GM12878 (cell line): ENCODE measurements at regions of chr1 and their contacts with region 1.

Region 1: DNA sequence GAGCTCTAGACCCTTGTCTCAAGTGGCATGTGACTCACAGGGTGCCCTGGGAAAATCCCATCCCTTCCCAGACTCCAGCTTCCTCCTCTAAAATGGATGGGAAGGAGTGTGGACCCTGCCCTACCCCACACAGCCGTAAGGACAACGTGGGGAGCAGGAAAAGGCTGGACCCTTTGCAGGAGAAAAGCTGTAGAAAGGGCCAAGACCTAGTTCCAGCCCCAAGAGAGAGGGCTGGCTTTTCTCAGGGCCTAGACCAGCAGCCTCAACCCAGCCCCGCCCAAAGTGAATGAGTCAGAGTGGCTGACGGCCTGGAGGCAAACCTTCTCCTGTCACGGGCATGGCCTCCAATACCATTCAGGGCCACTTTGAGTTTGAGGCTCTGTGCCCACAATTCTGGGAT is 1.1 kb downstream of the LAMB3 start:
- DNase-seq: no peak
- ATAC-seq: peak; percentile 78
- H3K4me3 ChIP-seq: no peak overlapping the region
- H3K27ac ChIP-seq: no peak overlapping the region
- H3K4me1 ChIP-seq: peaks cover 23% of the 10 kb centered on the region
- H3K27me3 ChIP-seq: no peaks in the 10 kb centered on the region
- CTCF ChIP-seq: no peak
- EP300 ChIP-seq: no peak
- POLR2A ChIP-seq: no peak
- RAD21 ChIP-seq: no peak

Region 2: GRCh38 chr1:209633335-209633997 is 17.7 kb before region 1 on chr1:
- CTCF ChIA-PET with region 1: interaction called, 8 read pairs
- POLR2A ChIA-PET with region 1: no interaction called
- RAD21 ChIA-PET with region 1: interaction called, 15 read pairs
- SMC1A ChIA-PET with region 1: interaction called, 8 read pairs
- in situ Hi-C with region 1: no loop called
- intact Hi-C with region 1: no loop called
- DNase-seq: no peak
- ATAC-seq: peak; percentile 79
- H3K4me3 ChIP-seq: no peak overlapping the region
- H3K27ac ChIP-seq: no peak overlapping the region
- H3K4me1 ChIP-seq: no peaks in the 10 kb centered on the region
- H3K27me3 ChIP-seq: no peaks in the 10 kb centered on the region; a peak in 1 of 4 replicates
- CTCF ChIP-seq: no peak
- EP300 ChIP-seq: no peak
- POLR2A ChIP-seq: no peak
- RAD21 ChIP-seq: no peak

Region 3: DNA sequence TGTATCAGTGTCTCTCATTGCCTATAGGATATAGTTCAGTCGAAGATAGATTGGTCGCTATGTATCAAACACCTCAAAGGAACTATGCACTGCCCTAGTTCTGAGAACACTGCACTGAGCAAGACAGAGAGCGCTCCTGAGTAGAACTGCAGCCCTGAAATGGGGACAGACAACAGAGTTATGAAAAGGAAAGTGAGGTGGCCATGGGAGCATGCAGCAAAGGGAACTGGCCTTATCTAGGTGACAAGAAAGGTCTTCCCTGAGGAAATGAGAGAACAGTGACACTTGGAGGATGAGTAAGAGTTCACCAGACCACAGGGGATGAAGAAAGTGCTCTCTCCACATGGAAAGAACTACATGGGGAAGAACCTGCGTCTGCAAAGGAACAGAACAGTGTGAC is 16.6 kb after region 1 on chr1:
- CTCF ChIA-PET with region 1: interaction called, 58 read pairs
- POLR2A ChIA-PET with region 1: interaction called, 95 read pairs
- RAD21 ChIA-PET with region 1: interaction called, 195 read pairs
- SMC1A ChIA-PET with region 1: interaction called, 261 read pairs
- in situ Hi-C with region 1: no loop called
- intact Hi-C with region 1: loop called (anchors 2 kb)
- DNase-seq: no peak
- ATAC-seq: peak; percentile 72
- H3K4me3 ChIP-seq: no peak overlapping the region
- H3K27ac ChIP-seq: no peak overlapping the region
- H3K4me1 ChIP-seq: peaks cover 3% of the 10 kb centered on the region
- H3K27me3 ChIP-seq: no peaks in the 10 kb centered on the region
- CTCF ChIP-seq: no peak
- EP300 ChIP-seq: no peak
- POLR2A ChIP-seq: no peak
- RAD21 ChIP-seq: no peak

Region 4: GRCh38 chr1:209685821-209686220 is 34.7 kb after region 1 on chr1:
- CTCF ChIA-PET with region 1: interaction called, 19 read pairs
- POLR2A ChIA-PET with region 1: interaction called, 8 read pairs
- RAD21 ChIA-PET with region 1: interaction called, 29 read pairs
- SMC1A ChIA-PET with region 1: interaction called, 128 read pairs
- in situ Hi-C with region 1: no loop called
- intact Hi-C with region 1: loop called (anchors 5 kb)
- DNase-seq: no peak
- ATAC-seq: peak; percentile 88
- H3K4me3 ChIP-seq: no peak overlapping the region
- H3K27ac ChIP-seq: no peak overlapping the region
- H3K4me1 ChIP-seq: no peaks in the 10 kb centered on the region
- H3K27me3 ChIP-seq: no peaks in the 10 kb centered on the region
- CTCF ChIP-seq: no peak
- EP300 ChIP-seq: no peak
- POLR2A ChIP-seq: no peak
- RAD21 ChIP-seq: no peak

Region 5: DNA sequence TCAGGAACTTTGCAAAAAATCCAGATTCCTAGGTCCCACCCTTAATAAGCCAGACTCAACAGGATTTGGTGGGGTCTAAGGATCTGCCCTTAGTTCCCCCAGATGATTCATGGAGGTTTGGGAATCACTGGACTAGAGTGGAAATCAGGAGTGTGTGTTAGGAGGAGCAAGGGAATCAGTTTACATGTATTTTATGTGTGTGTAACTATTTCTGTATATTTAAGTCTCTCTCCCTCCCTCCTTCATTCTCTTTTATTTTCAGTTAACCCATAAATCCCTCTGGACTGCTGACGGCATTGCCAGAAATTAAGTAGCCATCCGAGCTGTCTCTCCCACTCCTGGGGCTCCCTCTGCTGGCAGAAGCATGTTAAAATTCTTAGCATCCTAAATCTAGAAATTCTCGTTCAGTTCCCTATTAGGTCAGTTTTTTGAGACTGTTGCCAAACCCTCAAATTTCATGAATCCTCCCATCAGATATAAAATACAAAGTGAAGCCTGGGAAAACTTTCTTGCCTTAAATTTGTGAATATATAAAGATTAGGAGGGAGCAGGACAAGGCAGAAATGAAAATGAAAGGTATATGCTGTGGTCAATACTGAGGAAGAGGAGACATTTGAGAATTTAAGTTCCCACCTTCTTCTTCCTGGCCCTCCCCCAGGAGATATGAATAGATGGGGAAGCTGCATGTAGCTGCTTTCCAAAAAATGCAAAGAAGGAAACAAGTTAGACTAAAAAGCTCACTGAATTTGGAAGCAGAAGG is 41.8 kb after region 1 on chr1:
- CTCF ChIA-PET with region 1: interaction called, 19 read pairs
- POLR2A ChIA-PET with region 1: interaction called, 8 read pairs
- RAD21 ChIA-PET with region 1: interaction called, 29 read pairs
- SMC1A ChIA-PET with region 1: interaction called, 128 read pairs
- in situ Hi-C with region 1: no loop called
- intact Hi-C with region 1: loop called (anchors 5 kb)
- DNase-seq: peak; percentile 34
- ATAC-seq: peak; percentile 89
- H3K4me3 ChIP-seq: no peak overlapping the region
- H3K27ac ChIP-seq: no peak overlapping the region
- H3K4me1 ChIP-seq: no peaks in the 10 kb centered on the region
- H3K27me3 ChIP-seq: no peaks in the 10 kb centered on the region
- CTCF ChIP-seq: peak; percentile 80 to 92 (median 83)
- EP300 ChIP-seq: 0 out of 4 replicates have a peak, but pooled peaks of 1 of the 2 experiments have one; percentile 31
- POLR2A ChIP-seq: no peak
- RAD21 ChIP-seq: peak; percentile 97